Right lobe of liver (tissue), 6 donors: ENCODE measurements at regions of chr1 and their contacts with region 1.

Region 1: DNA sequence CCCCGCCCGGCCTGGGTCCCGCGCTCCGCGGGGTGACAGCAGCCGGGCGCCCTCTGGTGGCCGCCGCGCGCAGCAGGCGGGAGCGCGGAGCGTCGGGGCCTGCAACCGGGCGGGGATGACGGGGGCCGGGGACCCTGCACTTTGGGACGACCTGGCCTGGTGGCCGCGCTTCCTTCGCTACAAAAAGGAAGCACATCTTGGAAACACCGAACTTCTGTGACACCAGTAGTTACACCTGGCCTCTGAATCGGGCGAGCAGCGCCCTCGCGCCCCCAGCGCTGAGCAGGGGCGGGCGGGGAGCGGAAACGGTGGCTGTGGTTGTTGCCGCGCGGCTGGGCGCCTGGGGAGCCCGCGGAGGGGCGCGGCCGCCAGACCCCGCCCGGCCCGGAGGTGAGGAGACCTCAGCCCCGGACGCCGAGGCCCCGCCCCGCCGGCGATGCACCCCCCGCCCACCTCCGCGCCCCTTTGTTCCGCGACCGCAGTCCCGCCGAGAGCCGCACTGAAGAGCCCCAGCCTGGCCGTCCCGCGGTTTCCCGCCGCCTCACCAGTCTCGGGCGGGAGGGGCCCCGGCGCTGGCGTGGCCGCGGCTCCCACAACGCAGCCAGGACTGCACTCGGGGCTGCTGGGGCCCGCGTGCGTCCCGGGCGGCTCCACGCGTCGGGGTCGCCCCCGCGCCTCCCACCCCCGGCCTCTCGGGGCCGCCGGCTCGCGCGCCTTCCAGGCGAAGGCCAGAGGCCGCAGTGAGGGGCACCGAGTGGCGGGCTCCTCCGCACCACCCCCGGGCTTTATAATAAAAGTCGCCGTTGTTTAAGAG is 59.3 kb downstream of the H3-3A start:
- DNase-seq: peak; percentile 64 to 76 (median 70)
- ATAC-seq: peak; percentile 76 to 89 (median 84)
- H3K4me3 ChIP-seq: peak overlapping the region; percentile 57 to 64 (median 63)
- H3K27ac ChIP-seq: peak overlapping the region; percentile 10 to 54 (median 43)
- H3K4me1 ChIP-seq: no peaks in the 10 kb centered on the region
- H3K27me3 ChIP-seq: no peaks in the 10 kb centered on the region
- CTCF ChIP-seq: peak; percentile 64 to 93 (median 80)
- POLR2A ChIP-seq: no peak

Region 2: GRCh38 chr1:225987491-225988316 is 134.1 kb before region 1 on chr1:
- intact Hi-C with region 1: loop called in 1 of 2 experiments (anchors 5 kb)
- DNase-seq: no peak
- ATAC-seq: peak in 3 of 4 donors; percentile 65 to 75 (median 73)
- H3K4me3 ChIP-seq: no peak overlapping the region
- H3K27ac ChIP-seq: no peak overlapping the region
- H3K4me1 ChIP-seq: no peaks in the 10 kb centered on the region
- H3K27me3 ChIP-seq: no peaks in the 10 kb centered on the region
- CTCF ChIP-seq: peak; percentile 59 to 79 (median 76)
- POLR2A ChIP-seq: no peak

Region 3: DNA sequence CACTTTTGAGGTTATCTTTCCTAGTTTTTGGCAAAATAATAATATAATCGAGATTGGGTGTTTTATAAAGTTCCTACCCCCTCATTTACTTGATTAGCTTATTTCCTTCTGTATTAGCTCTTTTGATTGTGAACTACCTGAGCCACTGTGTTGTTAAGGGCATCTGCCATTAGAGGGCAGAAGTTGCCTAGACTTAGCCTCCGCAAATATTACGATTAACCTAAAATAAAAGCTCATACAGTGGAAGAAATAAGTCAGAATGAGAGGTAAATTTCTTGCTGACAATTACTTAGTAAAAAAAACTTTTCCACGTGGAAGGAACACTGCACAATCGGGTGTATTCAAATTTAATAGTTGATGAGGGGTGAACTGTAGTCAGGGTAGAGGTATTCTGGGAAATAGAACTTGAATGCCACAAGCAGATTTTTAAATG is 57.0 kb before region 1 on chr1:
- intact Hi-C with region 1: loop called (anchors 5 kb)
- DNase-seq: no peak
- ATAC-seq: peak; percentile 10 to 30 (median 26)
- H3K4me3 ChIP-seq: peak overlapping the region; percentile 78 to 90 (median 81)
- H3K27ac ChIP-seq: peak overlapping the region in 1 of 3 donors; percentile 49
- H3K4me1 ChIP-seq: peaks cover 0 to 29% (median 12%) of the 10 kb centered on the region in 4 donors
- H3K27me3 ChIP-seq: no peaks in the 10 kb centered on the region
- CTCF ChIP-seq: peak; percentile 49 to 57 (median 52)
- POLR2A ChIP-seq: no peak

Region 4: DNA sequence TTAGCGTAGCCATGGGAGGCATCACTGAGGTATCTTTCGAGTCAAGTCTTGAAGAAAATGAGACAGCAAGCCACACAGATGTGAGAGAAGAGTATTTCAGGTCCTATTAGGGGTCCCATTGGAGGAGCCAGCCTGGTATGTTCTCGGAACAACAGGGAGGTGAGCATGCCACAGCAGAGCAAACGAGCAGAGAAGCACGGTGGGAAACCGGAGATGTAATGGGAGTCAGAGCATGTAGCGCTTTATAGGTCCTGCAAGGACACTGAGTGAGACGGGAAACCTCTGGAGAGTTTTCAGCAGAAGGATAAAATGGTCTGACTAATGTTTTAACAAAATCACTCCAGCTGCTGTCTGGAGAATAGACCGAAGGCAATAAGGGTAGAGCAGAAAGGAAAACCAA is 43.4 kb before region 1 on chr1:
- intact Hi-C with region 1: loop called in 1 of 2 experiments (anchors 5 kb)
- DNase-seq: no peak
- ATAC-seq: no peak
- H3K4me3 ChIP-seq: no peak overlapping the region
- H3K27ac ChIP-seq: no peak overlapping the region
- H3K4me1 ChIP-seq: peaks cover 0 to 4% (median 0%) of the 10 kb centered on the region in 4 donors
- H3K27me3 ChIP-seq: no peaks in the 10 kb centered on the region
- CTCF ChIP-seq: no peak
- POLR2A ChIP-seq: no peak

Region 5: GRCh38 chr1:226195144-226195543 is 73.3 kb after region 1 on chr1:
- intact Hi-C with region 1: loop called (anchors 5 kb)
- DNase-seq: no peak
- ATAC-seq: no peak
- H3K4me3 ChIP-seq: no peak overlapping the region
- H3K27ac ChIP-seq: no peak overlapping the region
- H3K4me1 ChIP-seq: no peaks in the 10 kb centered on the region
- H3K27me3 ChIP-seq: no peaks in the 10 kb centered on the region
- CTCF ChIP-seq: no peak
- POLR2A ChIP-seq: no peak

Region 6: GRCh38 chr1:226337276-226337875 is 215.6 kb after region 1 on chr1:
- intact Hi-C with region 1: no loop called
- DNase-seq: no peak
- ATAC-seq: no peak
- H3K4me3 ChIP-seq: no peak overlapping the region
- H3K27ac ChIP-seq: no peak overlapping the region
- H3K4me1 ChIP-seq: no peaks in the 10 kb centered on the region
- H3K27me3 ChIP-seq: no peaks in the 10 kb centered on the region
- CTCF ChIP-seq: no peak
- POLR2A ChIP-seq: no peak